ENCODE measurements at regions of chr17 and their contacts with region 1.

Region 1: GRCh38 chr17:68101075-68101992 is 65.8 kb downstream of the KPNA2 start:
- DNase-seq: peak; percentile 96
- ATAC-seq: peak; percentile 99

Region 2: DNA sequence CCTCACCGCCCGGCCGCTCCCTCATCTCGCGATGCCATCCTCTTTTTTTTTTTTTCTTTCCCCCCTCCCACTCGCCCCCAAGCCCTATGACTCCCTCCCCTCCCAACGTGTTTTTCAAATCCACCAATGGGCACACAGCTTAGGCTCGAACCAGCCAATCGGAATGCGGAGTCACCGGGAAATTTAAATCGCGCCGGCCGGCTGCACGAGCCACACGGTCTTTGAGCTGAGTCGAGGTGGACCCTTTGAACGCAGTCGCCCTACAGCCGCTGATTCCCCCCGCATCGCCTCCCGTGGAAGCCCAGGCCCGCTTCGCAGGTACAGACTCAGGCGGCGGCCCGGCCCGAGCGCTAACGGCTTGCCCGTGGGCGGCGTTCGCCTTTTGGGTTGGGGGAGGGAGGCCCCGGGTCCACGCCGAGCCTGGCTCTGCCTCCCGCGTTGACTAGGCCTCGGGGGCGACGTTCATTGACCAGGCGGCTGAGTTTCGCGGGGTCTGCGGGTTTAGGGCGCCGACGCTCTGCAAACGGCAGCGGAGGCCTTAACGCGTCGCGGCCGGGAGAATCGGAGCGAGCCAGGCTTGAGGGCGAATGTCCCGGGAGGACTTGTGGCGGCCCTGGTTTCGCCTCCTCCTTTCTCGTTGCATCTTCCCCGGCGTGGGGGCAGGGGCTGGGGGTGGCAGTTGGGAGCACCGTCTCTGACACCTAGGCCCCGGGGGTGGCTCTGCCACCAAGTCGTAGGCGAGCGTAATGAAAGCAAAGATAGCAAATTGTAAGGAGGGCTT is 65.6 kb before region 1 on chr17 and contains the start of gene KPNA2:
- intact Hi-C with region 1: loop called (anchors 5 kb)
- DNase-seq: peak; percentile 95
- ATAC-seq: peak; percentile 97
- total RNA-seq, gene KPNA2: 20.8 TPM